Mammary epithelial cell (primary cell): ENCODE measurements at regions of chr18 and their contacts with region 1.

Region 1: DNA sequence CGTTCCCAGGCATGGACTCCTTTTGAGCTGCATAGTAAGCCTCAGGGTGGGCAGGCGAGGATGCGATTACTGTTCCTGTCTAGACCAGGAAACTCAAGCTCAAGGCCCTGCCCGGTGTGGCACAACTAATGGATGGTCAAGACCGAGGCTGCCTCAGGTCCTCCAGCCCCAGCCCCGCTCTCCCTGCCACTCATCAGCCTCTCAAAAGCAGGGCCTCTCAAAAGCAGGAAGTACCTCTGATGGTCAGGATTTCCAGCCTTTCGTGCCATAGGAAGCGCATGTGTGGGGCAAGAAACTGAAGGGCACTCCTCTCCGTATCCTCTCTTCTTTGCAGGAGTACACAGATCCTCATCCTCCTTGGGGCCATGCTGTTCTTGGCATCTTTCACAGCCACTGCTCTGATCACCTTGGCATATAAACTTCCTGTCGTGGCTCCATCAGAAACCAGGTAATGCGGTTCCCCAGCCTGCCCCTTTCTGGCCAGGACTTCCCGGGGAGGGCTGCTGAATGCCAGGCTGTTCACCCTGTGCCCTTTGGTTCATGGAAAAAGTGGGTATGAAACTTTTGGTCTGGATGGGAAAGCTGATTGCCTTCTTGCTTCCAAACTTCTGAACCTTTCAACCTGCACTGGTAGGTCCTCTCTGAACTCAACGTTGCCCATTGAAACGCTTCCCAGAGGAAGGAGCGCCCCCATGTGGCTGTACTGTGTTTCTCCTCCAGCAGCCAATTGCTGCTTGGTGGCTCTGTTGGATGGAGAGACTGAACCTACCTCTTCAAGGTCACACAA is 82.8 kb upstream of the SEC11C start:
- DNase-seq: peak; percentile 58
- H3K4me3 ChIP-seq: no peak overlapping the region
- H3K27ac ChIP-seq: no peak overlapping the region
- H3K4me1 ChIP-seq: no peaks in the 10 kb centered on the region
- H3K27me3 ChIP-seq: no peaks in the 10 kb centered on the region
- CTCF ChIP-seq: peak; percentile 92 to 96

Region 2: DNA sequence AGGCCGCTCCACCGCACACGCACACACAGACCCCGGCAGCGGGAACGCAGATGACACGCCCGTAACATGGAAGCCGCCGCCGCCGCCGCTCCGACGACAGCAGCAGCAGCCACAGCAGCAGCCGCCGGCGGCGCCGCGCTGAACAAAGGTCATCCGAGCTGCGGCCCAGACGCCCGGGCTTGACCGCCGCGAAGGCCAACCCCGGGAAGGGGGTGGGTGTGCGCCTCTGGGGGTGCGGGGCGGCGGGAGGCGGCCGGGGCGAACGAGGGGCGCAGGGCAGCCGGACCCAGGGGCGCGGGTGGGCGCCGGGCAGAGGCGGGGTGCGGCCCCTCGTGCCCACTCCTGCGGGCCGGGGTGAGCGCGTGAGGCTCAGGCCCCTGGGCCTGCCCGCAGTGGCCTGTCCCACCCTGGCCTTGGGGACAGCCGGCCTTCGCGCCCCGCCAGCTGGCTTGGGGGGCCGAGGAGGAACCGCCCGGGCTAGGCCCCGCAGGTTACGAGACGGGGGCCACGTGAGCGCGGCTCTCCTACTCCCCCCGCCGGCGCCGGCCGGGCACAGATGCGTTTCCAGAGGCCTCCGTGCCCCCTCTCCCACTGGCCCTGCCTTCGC is 193.3 kb before region 1 on chr18:
- CTCF ChIA-PET with region 1: no interaction called
- dilution Hi-C with region 1: no loop called
- in situ Hi-C with region 1: no loop called
- intact Hi-C with region 1: loop called (anchors 2 kb)
- DNase-seq: no peak
- H3K4me3 ChIP-seq: peak overlapping the region; percentile 28 to 54 (median 46)
- H3K27ac ChIP-seq: peak overlapping the region; percentile 58
- H3K4me1 ChIP-seq: peaks cover 70% of the 10 kb centered on the region
- H3K27me3 ChIP-seq: no peaks in the 10 kb centered on the region
- CTCF ChIP-seq: no peak

Region 3: GRCh38 chr18:58896268-58896667 is 160.6 kb before region 1 on chr18:
- CTCF ChIA-PET with region 1: no interaction called
- dilution Hi-C with region 1: no loop called
- in situ Hi-C with region 1: no loop called
- intact Hi-C with region 1: loop called (anchors 5 kb)
- DNase-seq: no peak
- H3K4me3 ChIP-seq: no peak overlapping the region
- H3K27ac ChIP-seq: no peak overlapping the region
- H3K4me1 ChIP-seq: peaks cover 10% of the 10 kb centered on the region
- H3K27me3 ChIP-seq: no peaks in the 10 kb centered on the region
- CTCF ChIP-seq: no peak

Region 4: DNA sequence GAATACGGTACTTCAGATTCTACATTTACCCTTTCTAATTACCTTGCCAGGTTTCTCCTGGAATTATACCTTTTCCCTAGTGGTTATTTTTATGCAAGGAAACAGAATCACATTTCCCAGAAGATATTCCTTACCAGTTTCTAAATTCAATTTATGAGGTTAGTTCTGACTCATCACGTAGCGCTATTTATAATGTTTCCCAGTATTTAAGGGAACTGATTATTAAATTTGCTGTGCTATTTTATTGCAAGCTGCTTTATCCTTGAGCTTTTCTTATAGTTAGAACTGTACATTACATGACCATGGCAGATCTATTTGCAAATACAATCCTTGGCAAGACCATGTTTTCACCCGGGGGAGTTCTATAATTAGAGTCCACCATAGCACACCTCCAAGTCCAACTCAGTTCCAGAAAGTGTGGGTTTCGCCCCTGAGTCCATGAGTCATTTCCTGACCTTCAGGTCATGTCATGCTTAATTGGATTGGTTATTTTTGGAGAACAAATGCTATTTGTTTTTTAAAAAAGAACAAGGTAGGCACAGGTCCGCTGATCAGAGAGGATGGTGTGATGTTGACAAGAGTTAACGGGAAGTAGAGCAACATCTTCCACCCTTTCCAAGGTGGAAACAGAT is 65.6 kb before region 1 on chr18:
- CTCF ChIA-PET with region 1: no interaction called
- dilution Hi-C with region 1: no loop called
- in situ Hi-C with region 1: no loop called
- intact Hi-C with region 1: loop called (anchors 5 kb)
- DNase-seq: peak; percentile 85
- H3K4me3 ChIP-seq: no peak overlapping the region
- H3K27ac ChIP-seq: peak overlapping the region; percentile 66
- H3K4me1 ChIP-seq: peaks cover 44% of the 10 kb centered on the region
- H3K27me3 ChIP-seq: no peaks in the 10 kb centered on the region
- CTCF ChIP-seq: no peak